ENCODE measurements at regions of chrX and their contacts with region 1.

Region 1: DNA sequence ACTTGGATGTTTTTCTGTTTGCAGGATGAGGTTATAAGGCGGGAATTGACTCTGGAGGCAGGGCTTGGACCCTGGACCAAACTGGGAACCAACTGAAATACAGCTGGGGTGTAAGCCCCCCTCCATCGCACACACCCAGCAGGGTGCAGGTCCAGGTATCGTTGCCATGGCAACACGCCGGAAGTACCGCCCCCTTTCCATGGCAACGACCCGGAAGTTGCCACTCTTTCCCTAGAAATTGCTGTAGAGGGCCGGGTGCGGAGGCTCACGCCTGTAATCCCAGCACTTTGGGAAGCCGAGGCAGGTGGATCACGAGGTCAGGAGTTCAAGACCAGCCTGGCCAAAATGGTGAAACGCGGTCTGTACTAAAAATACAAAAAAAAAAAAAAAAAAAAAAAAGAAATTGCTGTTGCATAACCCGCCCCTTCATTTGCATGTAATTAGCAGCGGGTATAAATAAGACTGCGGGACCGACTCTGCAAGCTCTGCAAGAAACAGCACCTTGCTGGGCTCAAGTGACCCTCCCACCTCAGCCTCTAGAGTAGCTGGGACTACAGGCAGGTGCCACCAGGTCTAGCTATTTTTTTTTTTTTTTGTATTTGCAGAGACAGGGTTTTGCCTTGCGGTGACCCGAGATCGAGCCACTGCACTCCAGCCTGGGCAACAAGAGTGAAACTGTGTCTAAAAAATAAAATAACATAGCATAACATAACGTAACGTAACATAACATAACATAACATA is 139.6 kb downstream of the CRLF2 start:
- DNase-seq: no peak
- H3K4me3 Mint-ChIP-seq: no peak overlapping the region
- H3K27ac Mint-ChIP-seq: no peak overlapping the region
- H3K4me1 Mint-ChIP-seq: no peaks in the 10 kb centered on the region
- H3K27me3 Mint-ChIP-seq: peaks cover 4% of the 10 kb centered on the region

Region 2: GRCh38 chrX:936979-937769 is 135.6 kb before region 1 on chrX:
- intact Hi-C with region 1: loop called (anchors 10 kb)
- DNase-seq: no peak
- H3K4me3 Mint-ChIP-seq: no peak overlapping the region
- H3K27ac Mint-ChIP-seq: no peak overlapping the region
- H3K4me1 Mint-ChIP-seq: no peaks in the 10 kb centered on the region
- H3K27me3 Mint-ChIP-seq: no peaks in the 10 kb centered on the region